Activated CD4-positive, alpha-beta memory T cell treated with anti-CD3 and anti-CD28 coated beads for 36 hours (primary cell): ENCODE measurements at regions of chr20 and their contacts with region 1.

Region 1: DNA sequence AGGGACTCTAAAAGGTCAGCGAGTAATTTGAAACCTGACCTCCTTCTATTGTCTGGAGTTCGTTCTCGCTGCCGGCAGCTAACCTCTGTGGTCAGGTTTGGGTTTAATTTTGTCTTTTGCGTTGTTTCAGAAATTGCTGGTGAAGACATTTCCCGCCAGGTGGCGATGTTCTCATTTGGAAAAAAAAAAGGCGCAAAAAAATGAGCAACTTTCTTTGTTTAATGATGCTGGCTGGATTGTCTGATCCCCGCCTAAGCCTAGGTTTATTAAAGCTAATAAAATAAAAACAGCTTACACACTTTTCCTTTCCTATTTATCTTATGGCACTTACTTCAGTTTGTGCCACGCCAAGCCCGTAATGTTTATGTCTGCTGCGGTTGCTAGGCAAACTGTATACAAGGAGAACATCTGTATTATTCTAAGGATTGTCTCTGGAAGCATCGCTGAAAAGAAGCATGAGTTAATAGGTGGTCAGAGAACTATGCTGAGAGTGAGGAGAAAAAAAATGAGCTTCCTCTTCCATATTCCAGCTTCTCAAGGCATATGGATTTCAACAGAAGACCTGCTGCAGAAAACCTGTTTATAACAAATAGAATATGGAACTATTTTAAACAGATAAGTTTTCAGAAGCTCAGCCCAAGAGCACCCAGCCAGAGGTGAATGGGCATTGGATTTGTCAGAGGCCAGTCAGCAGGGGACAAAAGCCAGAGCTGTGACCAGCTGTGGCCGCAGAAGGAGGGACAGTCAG is 205.7 kb downstream of the DOK5 start:
- DNase-seq: peak; percentile 23
- H3K4me3 Mint-ChIP-seq: no peak overlapping the region
- H3K27ac Mint-ChIP-seq: no peak overlapping the region
- H3K4me1 Mint-ChIP-seq: no peaks in the 10 kb centered on the region
- H3K27me3 Mint-ChIP-seq: peaks cover 19% of the 10 kb centered on the region

Region 2: GRCh38 chr20:54698356-54698755 is 17.3 kb after region 1 on chr20:
- CTCF ChIA-PET with region 1: no interaction called
- POLR2A ChIA-PET with region 1: no interaction called
- intact Hi-C with region 1: no loop called
- DNase-seq: no peak
- H3K4me3 Mint-ChIP-seq: no peak overlapping the region
- H3K27ac Mint-ChIP-seq: no peak overlapping the region
- H3K4me1 Mint-ChIP-seq: no peaks in the 10 kb centered on the region
- H3K27me3 Mint-ChIP-seq: peaks cover 2% of the 10 kb centered on the region

Region 3: GRCh38 chr20:56247948-56248782 is 1567.1 kb after region 1 on chr20 and contains the start of gene MC3R:
- CTCF ChIA-PET with region 1: interaction called, 3 read pairs
- POLR2A ChIA-PET with region 1: no interaction called
- intact Hi-C with region 1: loop called (anchors 10 kb)
- DNase-seq: peak; percentile 57
- H3K4me3 Mint-ChIP-seq: no peak within 1 kb of the TSS
- H3K27ac Mint-ChIP-seq: no peak within 1 kb of the TSS
- H3K4me1 Mint-ChIP-seq: no peaks in the 10 kb centered on the region
- H3K27me3 Mint-ChIP-seq: peaks cover 34% of the 10 kb centered on the region
- total RNA-seq, gene MC3R: not detected